ENCODE measurements at regions of chr4 and their contacts with region 1.

Region 1: DNA sequence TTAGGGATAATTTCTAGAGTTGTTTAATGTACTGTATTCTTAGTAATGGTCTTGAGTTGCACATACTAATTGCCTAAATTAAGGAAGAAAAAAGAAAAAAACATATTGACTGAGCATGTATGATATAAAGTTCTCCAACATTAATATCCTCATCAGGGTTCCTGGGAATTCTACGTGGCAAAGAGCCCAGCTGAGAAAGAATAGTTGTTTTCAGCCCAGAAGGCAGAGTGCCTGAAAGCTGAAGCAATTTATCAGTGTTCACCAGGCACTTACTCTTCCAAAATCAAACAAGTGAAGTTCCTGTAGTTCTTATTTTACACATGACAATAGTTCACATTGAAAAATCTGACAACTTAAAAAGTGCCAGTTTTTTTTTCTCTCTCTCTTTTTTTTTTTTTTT is 27.7 kb downstream of the YIPF7 start:
- DNase-seq: no peak
- H3K4me3 ChIP-seq: no peak overlapping the region
- H3K27ac ChIP-seq: no peak overlapping the region
- H3K4me1 ChIP-seq: no peaks in the 10 kb centered on the region
- H3K27me3 ChIP-seq: no peaks in the 10 kb centered on the region; the same call in 1 of the 2 replicates

Region 2: DNA sequence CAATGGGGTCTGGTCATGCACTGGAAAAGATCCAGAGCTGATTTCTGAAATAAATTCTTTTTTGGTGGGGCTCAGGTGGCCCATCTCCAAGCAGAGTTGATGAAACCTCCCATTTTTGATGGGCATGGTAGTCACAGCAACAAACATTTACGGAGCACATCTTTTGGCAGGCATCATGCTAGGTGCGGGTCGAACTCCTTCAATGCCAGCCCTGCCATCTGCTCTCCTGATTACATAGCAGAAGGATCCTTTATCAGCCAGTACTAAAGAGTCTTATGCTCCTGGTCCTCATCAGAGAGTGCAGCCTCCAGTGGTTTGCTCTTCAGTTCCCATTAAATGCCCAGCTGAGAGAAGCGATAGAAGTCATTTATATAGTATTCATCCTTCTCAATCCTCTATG is 1609.4 kb before region 1 on chr4:
- in situ Hi-C with region 1: loop called (anchors 25 kb)
- DNase-seq: no peak
- H3K4me3 ChIP-seq: no peak overlapping the region
- H3K27ac ChIP-seq: no peak overlapping the region
- H3K4me1 ChIP-seq: no peaks in the 10 kb centered on the region
- H3K27me3 ChIP-seq: no peaks in the 10 kb centered on the region

Region 3: DNA sequence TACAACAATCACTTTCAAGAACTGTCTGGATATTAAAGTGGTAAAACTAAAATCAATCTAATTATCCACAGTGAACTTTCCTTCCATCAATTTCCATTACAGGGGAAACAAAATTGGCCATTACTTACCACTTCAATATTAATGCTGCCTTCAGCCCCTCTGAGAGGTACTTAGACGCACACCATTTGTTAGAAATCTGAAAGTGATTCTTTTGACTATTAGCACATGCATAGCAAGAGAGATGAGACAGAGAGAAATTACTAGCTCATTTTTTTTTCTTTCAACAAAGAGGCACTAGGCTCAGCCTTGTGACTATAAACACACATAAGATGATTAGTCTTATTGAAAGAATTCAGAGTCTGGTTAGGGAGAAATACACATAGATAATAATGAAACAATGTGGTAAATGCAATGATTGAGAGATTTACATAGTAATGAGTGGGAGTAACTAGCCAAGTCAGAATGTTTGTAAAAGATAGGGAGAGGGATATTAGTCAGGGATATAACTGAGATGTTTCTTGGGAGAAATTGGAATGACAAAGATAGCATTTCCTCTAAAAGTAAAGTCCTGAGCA is 65.6 kb before region 1 on chr4:
- in situ Hi-C with region 1: no loop called
- DNase-seq: no peak
- H3K4me3 ChIP-seq: no peak overlapping the region
- H3K27ac ChIP-seq: no peak overlapping the region
- H3K4me1 ChIP-seq: no peaks in the 10 kb centered on the region
- H3K27me3 ChIP-seq: no peaks in the 10 kb centered on the region

Region 4: DNA sequence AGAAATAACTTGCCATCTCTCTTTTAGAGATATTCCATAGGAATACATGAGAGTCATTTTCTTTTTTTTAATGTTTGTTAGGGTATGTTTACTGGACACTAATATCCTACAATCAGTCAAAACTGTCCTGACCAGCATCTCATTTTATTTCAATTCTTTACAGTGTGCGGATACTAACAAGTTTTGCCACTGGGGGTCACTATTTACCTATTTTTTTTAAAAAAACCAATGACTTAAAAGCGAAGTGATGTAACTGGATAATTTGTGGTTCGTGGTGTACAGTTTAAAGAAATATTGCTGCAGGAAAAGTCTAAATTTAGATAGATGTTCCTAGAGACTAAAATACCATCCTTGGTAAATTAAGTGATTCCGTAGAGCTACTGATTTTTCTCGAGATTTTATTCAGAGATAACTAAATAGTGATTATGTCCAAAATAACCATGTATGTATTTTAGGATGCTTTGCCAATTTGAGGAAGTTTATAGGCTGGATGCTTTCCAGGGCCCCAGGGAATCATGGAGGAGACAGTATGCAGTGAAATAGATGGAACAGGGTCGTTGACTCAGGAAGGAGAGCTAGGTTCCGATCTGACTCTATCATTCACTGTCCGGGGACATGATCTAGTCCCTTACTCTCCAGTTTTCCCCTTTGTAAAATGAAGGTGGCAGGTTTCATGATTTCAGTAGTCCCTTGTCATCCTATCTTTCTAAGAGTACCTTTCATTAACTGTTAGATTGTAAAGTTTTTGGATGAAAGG is 136.6 kb after region 1 on chr4:
- in situ Hi-C with region 1: no loop called
- DNase-seq: peak; percentile 62
- H3K4me3 ChIP-seq: no peak overlapping the region; the same call in 1 of the 2 replicates
- H3K27ac ChIP-seq: no peak overlapping the region
- H3K4me1 ChIP-seq: peaks cover 4% of the 10 kb centered on the region; the same call in 1 of the 2 replicates
- H3K27me3 ChIP-seq: no peaks in the 10 kb centered on the region

Region 5: GRCh38 chr4:44869222-44869882 is 245.7 kb after region 1 on chr4:
- in situ Hi-C with region 1: no loop called
- DNase-seq: peak; percentile 2
- H3K4me3 ChIP-seq: no peak overlapping the region
- H3K27ac ChIP-seq: no peak overlapping the region
- H3K4me1 ChIP-seq: no peaks in the 10 kb centered on the region
- H3K27me3 ChIP-seq: no peaks in the 10 kb centered on the region

Region 6: GRCh38 chr4:45155081-45155777 is 531.6 kb after region 1 on chr4:
- in situ Hi-C with region 1: no loop called
- DNase-seq: peak; percentile 5
- H3K4me3 ChIP-seq: no peak overlapping the region
- H3K27ac ChIP-seq: no peak overlapping the region
- H3K4me1 ChIP-seq: no peaks in the 10 kb centered on the region
- H3K27me3 ChIP-seq: no peaks in the 10 kb centered on the region

Measured in GM23248 (cell line).